Endothelial cell of umbilical vein (primary cell): ENCODE measurements at regions of chr14 and their contacts with region 1.

Region 1: GRCh38 chr14:27392153-27392552 is 794.3 kb upstream of the NOVA1 start:
- DNase-seq: peak; percentile 71
- H3K4me3 ChIP-seq: no peak overlapping the region
- H3K27ac ChIP-seq: peak overlapping the region; percentile 83
- H3K4me1 ChIP-seq: peaks cover 19% of the 10 kb centered on the region
- H3K27me3 ChIP-seq: no peaks in the 10 kb centered on the region
- CTCF ChIP-seq: no peak
- POLR2A ChIP-seq: no peak

Region 2: DNA sequence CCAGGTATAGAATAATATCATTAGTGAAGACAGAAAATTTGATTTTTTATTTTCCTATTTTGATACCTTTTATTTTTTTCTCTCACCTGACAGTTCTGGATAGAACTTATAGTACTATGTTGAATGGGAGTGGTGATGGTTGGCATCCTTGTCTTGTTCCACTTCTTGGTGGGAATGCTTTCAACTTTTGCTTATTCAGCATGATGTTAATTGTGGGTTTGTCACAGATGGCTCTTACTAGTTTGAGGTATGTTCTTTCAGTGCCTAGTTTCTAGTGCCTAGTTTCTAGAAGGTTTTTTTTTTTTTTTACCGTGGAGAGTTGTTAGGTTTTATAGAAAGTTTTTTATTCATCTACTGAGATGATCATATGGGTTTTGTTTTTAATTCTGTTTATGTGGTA is 278.0 kb before region 1 on chr14:
- CTCF ChIA-PET with region 1: no interaction called
- POLR2A ChIA-PET with region 1: no interaction called
- dilution Hi-C with region 1: no loop called
- intact Hi-C with region 1: no loop called
- DNase-seq: no peak
- H3K4me3 ChIP-seq: no peak overlapping the region
- H3K27ac ChIP-seq: no peak overlapping the region
- H3K4me1 ChIP-seq: no peaks in the 10 kb centered on the region
- H3K27me3 ChIP-seq: no peaks in the 10 kb centered on the region
- CTCF ChIP-seq: no peak
- POLR2A ChIP-seq: no peak

Region 3: DNA sequence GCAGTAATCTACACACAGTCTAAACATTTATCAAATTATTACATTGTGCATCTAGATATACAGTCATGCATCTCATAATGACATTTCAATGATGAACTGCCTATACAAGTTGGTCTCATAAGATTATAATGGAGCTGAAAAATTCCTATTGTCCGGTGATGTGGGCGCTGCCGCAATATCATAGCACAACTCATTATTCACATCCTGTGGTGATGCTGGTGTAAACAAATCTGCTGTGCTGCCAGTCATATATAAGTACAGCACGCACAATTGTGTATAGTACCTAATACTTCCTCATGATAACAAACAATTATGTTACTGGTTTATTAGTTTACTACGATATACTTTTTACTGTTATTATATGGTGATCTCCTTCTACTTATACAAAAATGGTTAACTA is 25.6 kb before region 1 on chr14:
- CTCF ChIA-PET with region 1: no interaction called
- POLR2A ChIA-PET with region 1: no interaction called
- dilution Hi-C with region 1: no loop called
- intact Hi-C with region 1: loop called (anchors 1 kb)
- DNase-seq: peak; percentile 81
- H3K4me3 ChIP-seq: no peak overlapping the region
- H3K27ac ChIP-seq: peak overlapping the region; percentile 78
- H3K4me1 ChIP-seq: peaks cover 14% of the 10 kb centered on the region
- H3K27me3 ChIP-seq: no peaks in the 10 kb centered on the region
- CTCF ChIP-seq: no peak
- POLR2A ChIP-seq: no peak

Region 4: GRCh38 chr14:27506276-27506675 is 114.1 kb after region 1 on chr14:
- CTCF ChIA-PET with region 1: no interaction called
- POLR2A ChIA-PET with region 1: no interaction called
- dilution Hi-C with region 1: no loop called
- intact Hi-C with region 1: no loop called
- DNase-seq: no peak
- H3K4me3 ChIP-seq: no peak overlapping the region
- H3K27ac ChIP-seq: no peak overlapping the region
- H3K4me1 ChIP-seq: no peaks in the 10 kb centered on the region
- H3K27me3 ChIP-seq: no peaks in the 10 kb centered on the region
- CTCF ChIP-seq: no peak
- POLR2A ChIP-seq: no peak

Region 5: DNA sequence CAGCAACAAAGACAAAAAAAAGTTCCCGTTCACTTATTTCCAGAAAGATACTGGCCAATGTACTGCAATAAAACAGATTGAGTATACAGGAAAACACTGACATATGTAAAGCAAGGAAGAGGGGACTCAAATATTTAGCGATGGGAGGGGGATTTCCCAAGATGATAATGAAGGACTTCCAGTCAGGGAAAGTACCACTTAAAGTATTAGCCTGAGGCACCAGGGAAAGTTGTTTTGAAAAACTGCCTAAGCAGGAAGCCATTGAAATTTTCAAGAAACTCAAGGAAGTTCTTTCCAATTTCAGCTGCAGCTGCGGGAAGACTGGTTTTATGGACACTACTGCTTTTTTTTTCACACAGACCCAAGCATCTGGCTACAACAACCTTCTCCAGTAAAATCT is 213.1 kb after region 1 on chr14:
- CTCF ChIA-PET with region 1: no interaction called
- POLR2A ChIA-PET with region 1: no interaction called
- dilution Hi-C with region 1: no loop called
- intact Hi-C with region 1: no loop called
- DNase-seq: no peak
- H3K4me3 ChIP-seq: no peak overlapping the region
- H3K27ac ChIP-seq: no peak overlapping the region
- H3K4me1 ChIP-seq: no peaks in the 10 kb centered on the region
- H3K27me3 ChIP-seq: no peaks in the 10 kb centered on the region
- CTCF ChIP-seq: no peak
- POLR2A ChIP-seq: no peak